Right lobe of liver (tissue), 6 donors: ENCODE measurements at regions of chr22 and their contacts with region 1.

Region 1: DNA sequence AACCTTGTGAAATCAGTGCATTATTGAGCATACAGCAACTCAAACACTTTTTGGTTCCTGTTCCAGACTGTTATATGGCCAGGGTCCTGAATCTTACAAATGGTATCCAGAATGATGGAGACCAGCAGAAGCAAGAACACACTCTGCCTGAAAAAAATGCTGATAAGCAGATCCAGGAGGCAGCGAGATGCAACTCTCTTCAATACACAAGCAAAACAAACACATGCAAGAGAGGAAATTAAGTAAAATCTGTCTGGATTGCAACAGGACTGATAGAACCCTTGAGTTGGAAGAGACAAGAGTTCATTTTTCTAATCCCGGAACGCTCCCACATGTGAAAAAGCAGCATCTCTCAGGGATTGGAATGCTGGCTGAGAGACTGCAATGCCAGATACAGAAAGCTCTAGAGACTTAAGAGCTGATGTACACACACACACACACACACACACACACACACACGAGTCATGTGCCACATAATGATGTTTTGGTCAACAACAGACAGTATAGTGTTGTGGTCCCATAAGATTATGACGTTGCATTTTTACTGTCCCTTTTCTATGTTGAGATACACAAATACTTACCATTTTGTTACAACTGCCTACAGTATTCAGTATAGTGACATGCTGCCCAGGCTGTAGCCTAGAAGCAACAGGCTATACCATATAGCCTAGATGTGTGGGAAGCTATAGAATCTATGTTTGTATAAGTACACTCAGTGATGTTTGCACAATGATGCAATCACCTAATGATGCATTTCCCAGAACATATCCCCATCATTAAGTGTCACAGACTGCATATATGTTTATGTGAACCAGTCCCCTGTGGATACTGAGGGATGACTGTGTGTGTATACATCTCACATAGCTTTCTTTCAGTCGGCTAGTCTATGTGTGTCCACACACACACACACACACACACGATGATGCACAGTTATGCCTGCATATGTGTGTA is 406.6 kb downstream of the LARGE1 start:
- DNase-seq: no peak
- ATAC-seq: peak in 3 of 4 donors; percentile 39 to 58 (median 43)
- H3K4me3 ChIP-seq: no peak overlapping the region
- H3K27ac ChIP-seq: no peak overlapping the region
- H3K4me1 ChIP-seq: peaks cover 0 to 16% (median 4%) of the 10 kb centered on the region in 4 donors
- H3K27me3 ChIP-seq: no peaks in the 10 kb centered on the region
- CTCF ChIP-seq: no peak
- POLR2A ChIP-seq: no peak

Region 2: DNA sequence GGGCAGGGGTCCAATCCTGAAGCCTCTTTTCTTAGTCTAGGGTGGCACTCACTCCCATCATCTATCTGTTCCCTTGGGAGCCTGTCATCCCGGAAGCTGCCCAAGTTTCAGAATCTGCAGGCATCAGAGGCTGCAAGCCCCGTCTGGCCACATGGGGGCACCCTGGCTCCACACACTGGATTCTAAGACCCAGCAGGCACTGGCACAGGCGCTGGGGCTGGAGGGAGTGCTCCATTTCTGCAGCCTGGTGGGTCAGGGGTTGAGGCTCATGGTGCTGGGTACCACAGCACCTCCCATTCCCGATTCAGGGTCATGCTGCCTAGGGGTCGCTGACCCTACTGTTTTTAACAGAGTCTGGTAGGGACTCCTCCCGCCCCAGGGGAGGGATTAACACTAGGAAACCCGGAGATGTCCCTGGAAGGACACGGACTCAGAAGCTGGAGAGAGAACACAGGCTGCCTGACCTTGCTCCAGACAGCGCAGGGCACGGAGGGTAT is 211.6 kb before region 1 on chr22:
- intact Hi-C with region 1: loop called in 1 of 2 experiments (anchors 5 kb)
- DNase-seq: peak; percentile 87 to 92 (median 90)
- ATAC-seq: peak; percentile 97 to 98 (median 98)
- H3K4me3 ChIP-seq: peak overlapping the region; percentile 32 to 48 (median 44)
- H3K27ac ChIP-seq: peak overlapping the region; percentile 43 to 73 (median 61)
- H3K4me1 ChIP-seq: peaks cover 0 to 14% (median 6%) of the 10 kb centered on the region in 4 donors
- H3K27me3 ChIP-seq: no peaks in the 10 kb centered on the region
- CTCF ChIP-seq: peak; percentile 94 to 99 (median 96)
- POLR2A ChIP-seq: no peak

Region 3: DNA sequence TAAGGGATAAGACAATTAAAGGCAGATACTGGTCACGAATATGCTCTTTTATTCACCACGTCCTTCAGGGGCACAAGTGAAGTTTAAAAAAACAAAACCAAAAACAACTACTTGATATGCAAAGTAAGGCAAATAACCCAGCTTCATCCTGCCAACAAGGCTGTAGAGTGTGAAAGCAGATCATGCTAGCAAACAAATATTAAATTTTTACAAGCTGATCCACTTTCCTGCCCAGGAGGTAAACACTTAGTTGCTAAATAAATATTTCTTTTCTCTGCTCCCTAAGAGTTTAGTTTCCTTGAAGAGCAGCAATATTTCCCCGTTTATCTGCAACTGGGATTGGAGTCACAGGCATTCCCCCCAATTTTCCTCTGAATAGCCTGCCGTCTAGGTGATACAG is 106.4 kb after region 1 on chr22:
- intact Hi-C with region 1: no loop called
- DNase-seq: no peak
- ATAC-seq: no peak
- H3K4me3 ChIP-seq: no peak overlapping the region
- H3K27ac ChIP-seq: no peak overlapping the region
- H3K4me1 ChIP-seq: no peaks in the 10 kb centered on the region
- H3K27me3 ChIP-seq: no peaks in the 10 kb centered on the region
- CTCF ChIP-seq: no peak
- POLR2A ChIP-seq: no peak

Region 4: DNA sequence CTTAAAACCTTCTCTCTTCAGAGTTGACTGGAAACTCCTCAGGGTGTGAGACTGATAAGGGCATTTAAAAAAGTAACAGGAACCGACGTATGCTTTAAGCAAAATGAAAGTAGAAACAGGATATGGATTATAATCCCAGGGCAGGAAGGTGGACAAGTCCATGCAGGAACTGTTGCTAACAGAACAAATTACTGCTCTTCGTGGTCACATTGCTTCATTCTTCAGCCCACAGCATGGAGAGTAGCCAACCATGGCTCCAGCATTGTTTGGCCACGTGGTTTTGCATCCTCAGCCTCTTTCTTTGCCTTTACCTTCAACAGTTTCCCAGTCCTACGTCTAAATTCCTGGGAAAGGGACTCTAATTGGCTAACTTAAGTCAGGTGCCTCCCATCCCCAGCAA is 989.2 kb after region 1 on chr22:
- intact Hi-C with region 1: no loop called
- DNase-seq: no peak
- ATAC-seq: no peak
- H3K4me3 ChIP-seq: no peak overlapping the region
- H3K27ac ChIP-seq: no peak overlapping the region
- H3K4me1 ChIP-seq: no peaks in the 10 kb centered on the region
- H3K27me3 ChIP-seq: no peaks in the 10 kb centered on the region
- CTCF ChIP-seq: no peak
- POLR2A ChIP-seq: no peak